Gastrocnemius medialis (tissue), 4 donors: ENCODE measurements at regions of chr1 and their contacts with region 1.

Region 1: DNA sequence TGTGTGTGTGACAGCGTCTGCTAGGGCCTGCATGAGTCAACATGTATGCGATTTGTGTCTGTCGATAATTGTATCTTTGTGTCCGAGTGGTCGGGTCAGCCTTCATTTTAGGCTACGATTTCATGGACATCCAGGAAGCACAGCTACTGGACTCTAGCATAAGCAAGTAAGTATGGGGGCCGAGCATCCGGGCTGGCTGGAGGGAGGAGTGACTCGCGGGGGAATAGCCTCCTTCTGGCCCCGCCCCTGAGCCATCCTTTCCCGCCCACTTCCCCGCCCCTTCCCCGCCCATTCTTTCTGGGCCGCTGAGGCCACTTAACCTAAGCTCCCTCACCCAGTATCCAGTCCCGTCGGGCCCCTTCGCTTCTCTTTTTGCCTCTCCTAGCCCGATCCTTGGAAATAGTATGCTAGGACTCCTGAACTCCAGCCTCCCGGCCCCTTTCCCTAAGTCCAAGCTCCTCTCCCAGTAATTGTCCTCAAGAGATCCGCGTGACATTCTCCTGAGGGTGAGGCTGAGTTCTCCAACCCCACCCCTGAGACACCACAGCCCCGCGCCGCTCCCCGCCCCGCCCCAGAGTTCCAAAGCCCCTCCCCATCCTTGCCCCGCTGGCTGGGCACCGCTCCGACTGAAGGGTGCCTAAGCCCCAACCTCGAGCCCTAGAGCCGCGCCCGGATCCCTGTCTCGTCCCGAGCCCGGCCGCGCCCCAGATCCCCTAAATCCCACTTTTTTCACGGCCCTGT is 1.2 kb downstream of the MAP3K6 start:
- DNase-seq: peak; percentile 82 to 88
- ATAC-seq: peak; percentile 79 to 80
- H3K4me3 ChIP-seq: peak overlapping the region; percentile 71 to 95 (median 77)
- H3K27ac ChIP-seq: peak overlapping the region; percentile 91 to 99 (median 96)
- H3K4me1 ChIP-seq: peaks cover 22 to 23% of the 10 kb centered on the region in 2 donors
- H3K27me3 ChIP-seq: no peaks in the 10 kb centered on the region
- CTCF ChIP-seq: no peak
- POLR2A ChIP-seq: peak; percentile 57 to 64

Region 2: GRCh38 chr1:27234049-27234882 is 131.3 kb before region 1 on chr1 and contains the start of gene WDTC1:
- in situ Hi-C with region 1: no loop called
- intact Hi-C with region 1: loop called (anchors 1 kb)
- DNase-seq: peak; percentile 96 to 97
- ATAC-seq: peak; percentile 96
- H3K4me3 ChIP-seq: peak within 1 kb of the TSS; percentile 69 to 90 (median 76)
- H3K27ac ChIP-seq: peak within 1 kb of the TSS; percentile 83 to 95 (median 89)
- H3K4me1 ChIP-seq: peaks cover 17 to 29% of the 10 kb centered on the region in 2 donors
- H3K27me3 ChIP-seq: no peaks in the 10 kb centered on the region
- CTCF ChIP-seq: no peak
- POLR2A ChIP-seq: peak; percentile 62 to 82
- total RNA-seq, gene WDTC1: 36.8 to 85.5 (median 60.6) TPM

Region 3: DNA sequence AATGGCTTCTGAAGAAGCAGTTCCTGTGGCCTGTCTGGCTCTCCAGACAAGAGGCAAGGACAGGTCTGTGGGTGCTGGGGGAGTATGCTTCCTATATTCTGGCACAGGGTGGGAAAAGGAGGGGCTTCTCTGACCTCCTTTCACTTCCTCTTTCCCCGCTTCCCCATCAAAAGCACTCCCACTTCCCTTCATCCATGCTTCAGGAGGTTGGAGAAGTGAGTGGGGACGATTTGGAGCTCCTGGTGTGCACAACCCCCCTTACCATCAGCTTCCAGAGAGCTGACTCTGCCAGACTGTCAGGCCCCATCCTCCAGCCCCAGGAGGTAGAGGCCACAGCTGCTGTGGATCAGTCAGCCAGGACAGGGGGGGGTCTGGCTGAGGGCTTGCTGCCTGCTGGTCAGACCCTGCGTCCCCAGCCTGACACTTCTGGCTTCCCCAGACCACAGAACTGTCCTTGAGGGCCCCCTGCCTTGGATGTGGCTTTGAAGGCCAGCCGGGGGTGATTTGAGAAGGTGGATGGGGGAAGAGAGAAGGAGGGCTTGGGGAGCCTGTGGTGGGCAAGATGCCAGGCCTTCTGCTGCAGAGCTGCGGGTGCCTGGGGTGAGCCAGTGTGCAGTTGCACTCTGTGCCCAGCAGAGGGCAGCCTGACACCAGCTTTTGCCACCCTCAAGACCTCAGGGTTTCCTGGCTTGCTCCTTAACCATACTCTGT is 65.0 kb before region 1 on chr1:
- in situ Hi-C with region 1: no loop called
- intact Hi-C with region 1: loop called (anchors 2 kb)
- DNase-seq: peak; percentile 67 to 79
- ATAC-seq: peak; percentile 84 to 92
- H3K4me3 ChIP-seq: no peak overlapping the region
- H3K27ac ChIP-seq: peak overlapping the region in 3 of 4 donors; percentile 41 to 65 (median 65)
- H3K4me1 ChIP-seq: peaks cover 27 to 37% of the 10 kb centered on the region in 2 donors
- H3K27me3 ChIP-seq: no peaks in the 10 kb centered on the region
- CTCF ChIP-seq: peak; percentile 96 to 99 (median 98)
- POLR2A ChIP-seq: no peak

Region 4: GRCh38 chr1:27321813-27322577 is 43.5 kb before region 1 on chr1 and contains the start of gene TMEM222:
- in situ Hi-C with region 1: no loop called
- intact Hi-C with region 1: loop called (anchors 2 kb)
- DNase-seq: peak; percentile 95 to 96
- ATAC-seq: peak; percentile 97
- H3K4me3 ChIP-seq: peak within 1 kb of the TSS; percentile 85 to 100 (median 87)
- H3K27ac ChIP-seq: peak within 1 kb of the TSS; percentile 90 to 95 (median 92)
- H3K4me1 ChIP-seq: peaks cover 21 to 35% of the 10 kb centered on the region in 2 donors
- H3K27me3 ChIP-seq: peaks cover 17 to 19% (median 18%) of the 10 kb centered on the region in 3 donors
- CTCF ChIP-seq: peak in 4 of 5 experiments; percentile 36 to 42 (median 38)
- POLR2A ChIP-seq: peak; percentile 54 to 62
- total RNA-seq, gene TMEM222: 16.5 to 21.9 (median 17.8) TPM

Region 5: GRCh38 chr1:27428316-27429028 is 62.9 kb after region 1 on chr1:
- in situ Hi-C with region 1: no loop called
- intact Hi-C with region 1: no loop called
- DNase-seq: peak; percentile 25 to 63
- ATAC-seq: peak; percentile 81 to 89
- H3K4me3 ChIP-seq: peak overlapping the region; percentile 26 to 38 (median 34)
- H3K27ac ChIP-seq: peak overlapping the region; percentile 75 to 83 (median 78)
- H3K4me1 ChIP-seq: peaks cover 64 to 80% of the 10 kb centered on the region in 2 donors
- H3K27me3 ChIP-seq: no peaks in the 10 kb centered on the region
- CTCF ChIP-seq: no peak
- POLR2A ChIP-seq: no peak